BJ (cell line): ENCODE measurements at regions of chr6 and their contacts with region 1.

Region 1: DNA sequence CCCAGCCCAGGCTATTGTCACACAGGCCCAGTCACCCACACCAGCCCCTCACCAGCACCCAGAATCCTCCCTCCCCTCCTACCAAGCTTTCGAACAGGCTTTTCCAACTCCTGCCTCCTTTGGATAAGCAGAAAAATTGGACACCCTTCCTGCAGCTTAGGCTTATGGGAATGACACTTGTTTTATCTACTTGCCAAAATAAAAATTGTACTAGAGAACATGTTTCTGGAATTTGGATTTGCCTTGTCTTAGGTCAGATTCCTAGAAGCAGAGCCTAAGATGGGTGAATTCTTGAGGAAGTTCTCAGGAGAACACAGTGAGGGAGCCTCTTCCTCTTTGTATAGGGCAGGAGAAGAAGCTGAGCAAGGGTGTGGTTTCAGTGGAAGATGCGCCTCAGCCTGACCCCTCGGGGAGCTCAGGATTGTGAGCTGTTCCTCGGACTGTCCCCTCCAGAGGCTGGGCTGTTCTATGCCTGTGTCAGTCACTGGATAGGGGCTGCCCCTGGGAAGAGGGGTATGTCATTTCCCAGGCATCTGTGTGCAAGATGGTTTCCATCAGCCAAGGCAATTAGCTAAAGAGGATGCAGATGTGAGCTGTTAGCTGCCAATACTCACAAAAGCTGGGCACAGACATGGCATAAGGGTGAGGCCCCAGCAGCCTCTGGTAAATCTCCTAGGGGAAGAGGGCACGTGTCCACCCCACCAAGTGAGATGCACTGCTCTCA is 33.9 kb downstream of the ITPR3 start:
- DNase-seq: peak; percentile 16
- H3K4me3 ChIP-seq: no peak overlapping the region
- H3K27me3 ChIP-seq: no peaks in the 10 kb centered on the region
- CTCF ChIP-seq: no peak

Region 2: DNA sequence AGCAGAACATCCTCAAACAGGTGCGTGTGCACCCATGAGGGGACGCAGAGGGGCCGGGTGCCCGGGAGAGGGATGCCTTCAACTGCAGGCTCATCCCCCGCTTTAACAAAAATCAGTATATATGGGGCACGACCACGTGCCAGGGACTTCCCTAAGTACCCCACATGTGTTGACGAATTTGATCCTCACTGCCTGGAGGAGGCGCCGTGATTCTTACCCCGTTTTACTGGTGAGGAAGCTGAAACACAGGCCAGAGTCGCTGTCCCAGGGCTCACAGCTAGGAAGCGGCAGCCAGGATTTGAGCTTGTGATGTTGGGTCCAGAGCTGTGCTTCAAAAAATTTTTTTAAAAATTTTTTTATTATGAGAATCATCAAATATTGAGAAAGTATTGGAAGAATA is 11.0 kb after region 1 on chr6:
- CTCF ChIA-PET with region 1: interaction called, 10 read pairs
- POLR2A ChIA-PET with region 1: no interaction called
- DNase-seq: no peak
- H3K4me3 ChIP-seq: no peak overlapping the region
- H3K27me3 ChIP-seq: no peaks in the 10 kb centered on the region
- CTCF ChIP-seq: no peak

Region 3: GRCh38 chr6:34036357-34037069 is 381.5 kb after region 1 on chr6:
- CTCF ChIA-PET with region 1: no interaction called
- POLR2A ChIA-PET with region 1: no interaction called
- DNase-seq: no peak
- H3K4me3 ChIP-seq: no peak overlapping the region
- H3K27me3 ChIP-seq: peaks cover 3% of the 10 kb centered on the region
- CTCF ChIP-seq: no peak